ENCODE measurements at regions of chr21 and their contacts with region 1.

Region 1: GRCh38 chr21:45590246-45590725 is 48.0 kb upstream of the SLC19A1 start:
- DNase-seq: peak; percentile 87
- H3K4me3 ChIP-seq: peak overlapping the region; percentile 36 to 57 (median 48)
- H3K27ac ChIP-seq: peak overlapping the region in 2 of 4 donors; percentile 38 to 52
- H3K4me1 ChIP-seq: peaks cover 0 to 24% (median 16%) of the 10 kb centered on the region in 4 donors
- H3K27me3 ChIP-seq: peaks cover 0 to 8% (median 0%) of the 10 kb centered on the region in 3 donors
- CTCF ChIP-seq: no peak
- EP300 ChIP-seq: no peak
- POLR2A ChIP-seq: no peak

Region 2: DNA sequence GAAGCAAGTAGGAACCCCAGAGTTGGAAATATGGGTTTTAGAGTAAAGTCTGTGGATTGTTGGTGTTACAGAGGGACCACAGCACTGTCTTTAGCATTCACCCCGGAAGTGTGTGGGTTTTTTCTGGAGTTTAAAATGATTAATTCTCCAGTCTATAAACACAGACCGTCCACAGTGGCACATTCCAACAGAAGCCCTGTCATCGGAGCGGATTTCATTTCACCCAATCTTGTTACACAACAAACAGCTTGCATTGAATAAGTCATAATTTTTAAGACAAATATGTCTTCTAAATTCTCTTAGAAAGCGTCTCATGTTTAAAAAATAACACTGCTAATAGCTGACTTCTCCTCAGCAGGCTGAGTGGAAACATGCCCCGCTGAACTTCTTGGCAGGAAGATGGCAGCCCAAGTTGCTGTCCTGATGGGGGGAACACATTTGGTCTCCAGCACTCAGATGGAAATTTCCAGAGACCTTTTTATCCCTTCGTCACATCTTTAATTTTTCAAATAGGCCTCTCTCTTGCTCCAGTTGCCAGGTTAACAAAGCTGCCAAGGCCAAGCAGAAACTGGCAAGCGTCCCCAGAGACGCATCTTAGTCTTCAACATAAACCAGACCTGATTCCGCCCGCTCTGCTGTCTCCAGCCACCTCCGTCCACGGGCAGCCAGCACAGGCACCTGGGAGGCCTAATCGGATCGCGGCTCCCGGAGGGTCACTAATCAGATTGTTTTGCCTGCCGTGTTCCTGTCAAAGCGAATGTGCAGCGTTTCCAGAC is 19.3 kb before region 1 on chr21:
- intact Hi-C with region 1: loop called (anchors 2 kb)
- DNase-seq: peak; percentile 94
- H3K4me3 ChIP-seq: peak overlapping the region in 1 of 4 donors; percentile 12
- H3K27ac ChIP-seq: peak overlapping the region; percentile 78 to 94 (median 86)
- H3K4me1 ChIP-seq: peaks cover 0 to 68% (median 49%) of the 10 kb centered on the region in 4 donors
- H3K27me3 ChIP-seq: no peaks in the 10 kb centered on the region
- CTCF ChIP-seq: no peak
- EP300 ChIP-seq: peak in 2 of 4 donors; percentile 35 to 51
- POLR2A ChIP-seq: no peak